Mammary epithelial cell (primary cell): ENCODE measurements at regions of chr17 and their contacts with region 1.

Region 1: GRCh38 chr17:42101513-42102319 is 3.4 kb upstream of the ZNF385C start:
- DNase-seq: peak; percentile 21
- H3K4me3 ChIP-seq: no peak overlapping the region
- H3K27ac ChIP-seq: no peak overlapping the region
- H3K4me1 ChIP-seq: no peaks in the 10 kb centered on the region
- H3K27me3 ChIP-seq: peaks cover 7% of the 10 kb centered on the region
- CTCF ChIP-seq: peak; percentile 87 to 96

Region 2: DNA sequence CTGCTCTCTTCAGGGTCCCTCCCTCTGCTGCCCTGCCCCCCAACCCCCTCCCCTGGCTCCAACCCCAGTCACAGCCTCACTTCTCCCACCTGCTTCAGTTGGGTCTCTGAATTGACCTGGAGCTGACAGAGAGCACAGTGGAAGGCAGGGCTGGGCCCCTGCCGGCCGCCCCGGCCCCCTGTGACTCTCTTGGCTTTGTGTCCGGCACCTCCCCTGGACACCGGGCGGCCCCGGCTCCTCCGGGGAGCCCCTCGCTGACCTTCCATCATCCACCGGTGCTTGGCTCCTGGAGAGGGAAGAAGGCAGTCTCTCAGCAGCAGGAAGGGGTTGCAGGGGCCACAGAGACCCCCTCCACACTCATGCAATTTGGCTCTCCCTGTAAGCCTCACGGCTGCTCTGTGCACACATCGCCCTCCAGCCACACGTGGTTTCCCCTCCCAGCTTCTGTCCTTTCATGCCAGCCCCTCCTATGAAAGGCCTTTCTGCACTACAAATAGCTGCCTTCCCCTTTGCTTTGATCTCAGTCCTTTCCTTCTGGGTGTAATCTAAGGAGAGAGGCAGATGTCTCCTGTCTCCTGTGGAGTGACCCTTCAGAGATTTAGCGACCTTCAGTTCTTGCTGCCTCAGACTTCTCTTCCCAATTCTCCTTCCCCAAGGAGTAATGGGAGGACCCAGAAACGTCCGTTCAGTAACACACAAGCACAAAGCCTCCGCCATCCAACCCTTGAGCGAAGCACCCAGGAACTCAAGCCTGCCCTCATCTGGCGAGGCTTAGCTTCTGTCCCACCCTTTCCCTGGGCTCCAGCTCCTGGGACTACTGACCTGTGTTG is 73.5 kb before region 1 on chr17:
- CTCF ChIA-PET with region 1: no interaction called
- dilution Hi-C with region 1: no loop called
- in situ Hi-C with region 1: no loop called
- intact Hi-C with region 1: loop called (anchors 1 kb)
- DNase-seq: no peak
- H3K4me3 ChIP-seq: no peak overlapping the region
- H3K27ac ChIP-seq: no peak overlapping the region
- H3K4me1 ChIP-seq: peaks cover 12% of the 10 kb centered on the region
- H3K27me3 ChIP-seq: no peaks in the 10 kb centered on the region
- CTCF ChIP-seq: no peak

Region 3: DNA sequence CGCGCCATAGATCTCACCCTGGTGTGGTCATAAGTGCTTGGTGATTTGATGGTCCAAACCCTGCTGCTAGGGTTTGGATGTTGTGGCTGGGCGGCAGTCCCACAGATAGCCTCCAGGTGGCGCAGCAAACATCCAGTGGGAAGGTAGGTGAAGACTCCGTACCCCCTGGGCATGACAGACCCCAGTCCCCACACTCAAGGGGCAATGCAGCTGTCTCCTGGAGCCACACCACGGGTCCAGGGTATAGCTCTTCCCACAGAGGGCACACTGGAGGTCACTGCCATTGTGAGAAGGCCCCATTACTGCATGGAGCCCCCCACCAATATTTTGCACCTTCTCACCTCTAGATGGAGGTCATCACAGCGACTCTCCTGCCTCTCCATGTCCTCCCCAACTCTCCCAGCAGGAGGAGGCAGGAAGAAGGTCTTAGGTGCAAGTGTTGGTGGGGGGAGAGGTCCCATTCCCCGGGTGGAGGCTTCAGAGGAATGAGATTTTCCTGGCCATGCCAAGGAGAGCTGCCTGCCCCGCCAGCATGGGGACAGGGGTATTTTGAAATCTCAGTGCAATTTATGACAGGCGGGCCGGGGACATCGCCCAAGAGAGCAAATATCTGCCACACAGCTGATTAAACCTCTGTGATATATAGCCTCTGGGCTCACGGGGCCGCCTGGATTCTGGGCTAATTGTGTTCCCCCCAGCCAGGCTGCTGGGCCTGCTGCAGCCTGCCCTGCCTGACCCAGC is 34.2 kb before region 1 on chr17:
- CTCF ChIA-PET with region 1: interaction called, 4 read pairs
- dilution Hi-C with region 1: no loop called
- in situ Hi-C with region 1: no loop called
- intact Hi-C with region 1: loop called (anchors 1 kb)
- DNase-seq: no peak
- H3K4me3 ChIP-seq: no peak overlapping the region
- H3K27ac ChIP-seq: no peak overlapping the region
- H3K4me1 ChIP-seq: peaks cover 4% of the 10 kb centered on the region
- H3K27me3 ChIP-seq: peaks cover 7% of the 10 kb centered on the region
- CTCF ChIP-seq: peak; percentile 88 to 93

Region 4: GRCh38 chr17:42153919-42154742 is 52.4 kb after region 1 on chr17:
- CTCF ChIA-PET with region 1: interaction called, 22 read pairs
- dilution Hi-C with region 1: no loop called
- in situ Hi-C with region 1: no loop called
- intact Hi-C with region 1: no loop called
- DNase-seq: no peak
- H3K4me3 ChIP-seq: peak overlapping the region; percentile 57 to 80 (median 69)
- H3K27ac ChIP-seq: peak overlapping the region; percentile 37
- H3K4me1 ChIP-seq: peaks cover 10% of the 10 kb centered on the region
- H3K27me3 ChIP-seq: no peaks in the 10 kb centered on the region
- CTCF ChIP-seq: no peak